ENCODE measurements at regions of chr9 and their contacts with region 1.

Region 1: DNA sequence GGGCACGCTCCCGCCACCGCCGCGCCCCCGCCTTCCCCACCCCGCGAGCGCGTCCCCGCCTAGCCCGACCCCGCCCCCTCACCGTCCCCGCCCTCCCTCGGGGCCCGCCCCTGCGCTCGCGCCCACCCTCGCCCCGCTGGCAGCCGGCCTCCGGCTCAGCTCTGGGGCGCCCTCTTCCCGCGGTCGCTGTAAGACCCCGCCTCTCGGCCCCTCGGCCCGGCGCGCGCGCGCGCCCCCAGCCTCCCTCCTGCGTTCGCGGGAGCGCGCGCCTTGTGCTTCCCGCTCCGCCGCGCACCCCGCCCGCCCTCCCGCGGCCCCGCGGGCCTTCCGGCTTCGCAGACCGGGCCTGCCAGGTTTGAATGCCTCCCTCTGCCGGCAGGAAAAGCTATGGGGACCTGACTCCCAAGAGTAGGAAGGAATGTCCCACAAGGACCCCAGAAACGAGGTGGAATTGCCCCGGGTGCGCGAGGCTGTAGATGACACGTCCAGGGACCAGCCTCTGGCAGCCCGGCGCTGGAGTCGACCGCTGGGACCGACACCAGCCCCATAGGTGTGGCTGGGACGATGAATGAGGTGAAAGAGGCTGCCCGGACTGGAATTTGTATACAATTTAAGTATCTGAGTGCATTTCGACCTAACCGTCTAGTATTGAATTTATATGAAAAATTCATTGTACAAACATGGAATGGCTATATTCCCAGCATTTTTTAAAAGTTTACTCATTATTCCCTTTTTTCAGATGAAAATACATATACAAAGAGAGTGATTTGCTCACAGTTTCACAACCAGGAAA is 416 bp upstream of the PTBP3 start:
- DNase-seq: peak; percentile 97
- ATAC-seq: peak; percentile 84
- H3K4me3 Mint-ChIP-seq: peak overlapping the region; percentile 89
- H3K27ac Mint-ChIP-seq: peak overlapping the region; percentile 98
- H3K4me1 Mint-ChIP-seq: peaks cover 33% of the 10 kb centered on the region
- H3K27me3 Mint-ChIP-seq: no peaks in the 10 kb centered on the region

Region 2: DNA sequence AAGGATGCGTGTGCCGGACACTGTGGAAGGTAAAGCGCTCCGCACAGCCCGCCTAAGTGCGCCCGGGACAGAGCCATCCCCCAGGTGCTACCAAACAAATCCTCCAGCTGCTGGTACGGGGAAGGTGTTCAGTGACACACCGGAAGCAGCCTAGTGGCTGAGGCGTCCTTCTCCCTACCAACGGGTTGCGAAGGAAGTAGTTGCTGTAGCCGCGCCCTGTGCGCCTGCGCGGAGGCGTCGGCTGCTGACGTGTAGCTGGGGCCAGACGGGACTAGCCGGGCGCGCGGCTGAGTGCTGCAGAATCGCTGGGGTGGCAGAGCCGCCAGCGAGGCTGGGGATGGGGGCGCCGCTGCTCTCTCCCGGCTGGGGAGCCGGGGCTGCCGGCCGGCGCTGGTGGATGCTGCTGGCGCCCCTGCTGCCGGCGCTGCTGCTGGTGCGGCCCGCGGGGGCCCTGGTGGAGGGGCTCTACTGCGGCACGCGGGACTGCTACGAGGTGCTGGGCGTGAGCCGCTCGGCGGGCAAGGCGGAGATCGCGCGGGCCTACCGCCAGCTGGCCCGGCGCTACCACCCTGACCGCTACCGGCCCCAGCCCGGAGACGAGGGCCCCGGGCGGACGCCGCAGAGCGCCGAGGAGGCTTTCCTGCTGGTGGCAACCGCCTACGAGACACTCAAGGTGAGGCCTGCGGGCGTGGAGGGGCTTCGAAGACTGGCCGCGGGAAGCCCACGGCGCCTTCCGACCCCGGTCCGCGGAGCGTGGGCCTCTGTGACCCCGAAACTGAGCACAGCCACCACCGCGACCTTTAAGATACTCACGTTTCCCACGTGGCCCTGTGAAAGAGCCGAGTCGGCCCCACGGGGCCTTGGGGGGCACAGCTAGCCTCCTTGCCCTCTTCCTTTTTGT is 702.5 kb before region 1 on chr9 and contains the start of gene DNAJC25:
- CTCF ChIA-PET with region 1: no interaction called
- POLR2A ChIA-PET with region 1: no interaction called
- intact Hi-C with region 1: loop called in 1 of 2 experiments (anchors 5 kb)
- DNase-seq: peak; percentile 98
- ATAC-seq: peak; percentile 98
- H3K4me3 Mint-ChIP-seq: peak within 1 kb of the TSS; percentile 94
- H3K27ac Mint-ChIP-seq: peak within 1 kb of the TSS; percentile 91
- H3K4me1 Mint-ChIP-seq: peaks cover 47% of the 10 kb centered on the region
- H3K27me3 Mint-ChIP-seq: no peaks in the 10 kb centered on the region
- total RNA-seq, gene DNAJC25: 6.3 to 7.5 TPM

Region 3: GRCh38 chr9:111992523-111992922 is 341.3 kb before region 1 on chr9:
- CTCF ChIA-PET with region 1: interaction called, 3 read pairs
- POLR2A ChIA-PET with region 1: no interaction called
- intact Hi-C with region 1: loop called in 1 of 2 experiments (anchors 5 kb)
- DNase-seq: peak; percentile 62
- ATAC-seq: peak; percentile 92
- H3K4me3 Mint-ChIP-seq: no peak overlapping the region
- H3K27ac Mint-ChIP-seq: no peak overlapping the region
- H3K4me1 Mint-ChIP-seq: peaks cover 34% of the 10 kb centered on the region
- H3K27me3 Mint-ChIP-seq: peaks cover 2% of the 10 kb centered on the region

Region 4: DNA sequence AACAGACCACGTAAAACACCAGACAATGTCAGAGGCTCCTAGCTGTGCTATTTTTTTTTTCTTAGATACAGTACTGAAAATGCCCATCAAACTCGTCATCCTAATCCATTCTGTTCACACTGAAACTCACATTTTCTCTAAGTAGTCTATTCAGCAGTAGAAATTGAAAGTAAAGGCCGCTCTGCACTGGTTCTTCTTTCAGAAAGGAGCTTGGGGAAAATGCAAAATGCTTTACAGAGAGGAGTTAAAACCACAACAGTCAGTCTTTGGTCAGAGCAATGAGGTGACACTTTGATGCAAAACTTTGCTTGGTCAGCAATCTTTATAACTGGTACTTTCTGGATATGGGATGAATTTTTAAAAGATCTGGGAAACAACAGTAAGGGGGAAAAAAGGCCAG is 114.9 kb before region 1 on chr9:
- CTCF ChIA-PET with region 1: no interaction called
- POLR2A ChIA-PET with region 1: no interaction called
- intact Hi-C with region 1: loop called (anchors 2 kb)
- DNase-seq: peak; percentile 18
- ATAC-seq: peak; percentile 95
- H3K4me3 Mint-ChIP-seq: no peak overlapping the region
- H3K27ac Mint-ChIP-seq: peak overlapping the region; percentile 64
- H3K4me1 Mint-ChIP-seq: peaks cover 32% of the 10 kb centered on the region
- H3K27me3 Mint-ChIP-seq: no peaks in the 10 kb centered on the region

Region 5: GRCh38 chr9:112355427-112355897 is 21.6 kb after region 1 on chr9:
- CTCF ChIA-PET with region 1: interaction called, 8 read pairs
- POLR2A ChIA-PET with region 1: interaction called, 3 read pairs
- intact Hi-C with region 1: loop called (anchors 1 kb)
- DNase-seq: peak; percentile 21
- ATAC-seq: peak; percentile 71
- H3K4me3 Mint-ChIP-seq: no peak overlapping the region
- H3K27ac Mint-ChIP-seq: peak overlapping the region; percentile 87
- H3K4me1 Mint-ChIP-seq: peaks cover 31% of the 10 kb centered on the region
- H3K27me3 Mint-ChIP-seq: peaks cover 2% of the 10 kb centered on the region

Region 6: DNA sequence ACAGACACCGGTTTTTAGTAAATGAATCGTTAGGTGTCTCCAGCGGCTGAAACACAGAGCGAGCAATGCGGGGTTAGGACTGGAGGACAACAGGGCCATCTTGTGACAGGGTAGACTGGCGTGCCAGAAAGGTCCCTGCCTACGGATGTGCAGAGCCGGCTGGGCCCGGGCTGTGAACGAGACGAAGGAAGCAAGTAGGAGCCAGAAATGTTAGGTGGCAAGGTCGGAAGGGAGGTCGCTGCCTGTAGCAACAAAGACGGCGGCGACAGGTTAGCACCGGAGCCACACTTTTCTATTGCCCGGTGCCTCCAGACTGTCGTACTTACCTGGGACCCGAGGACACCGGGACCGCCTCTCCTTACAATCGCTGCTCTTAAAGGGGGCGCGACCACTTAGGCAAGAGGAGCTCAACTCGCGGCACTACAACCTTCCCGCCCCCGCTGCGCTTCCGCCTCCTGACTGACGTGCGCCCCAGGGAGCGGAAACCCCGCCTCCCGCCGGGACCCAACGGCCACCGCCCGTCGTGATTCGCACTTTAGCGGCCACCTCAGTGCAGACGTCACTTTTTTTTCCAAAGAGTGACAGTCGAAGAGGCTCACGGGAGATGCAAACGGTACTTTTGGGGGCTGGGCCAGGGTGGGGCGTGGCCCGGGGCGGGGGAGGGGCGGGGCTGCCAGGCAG is 384.0 kb after region 1 on chr9 and contains the start of gene INIP:
- CTCF ChIA-PET with region 1: no interaction called
- POLR2A ChIA-PET with region 1: no interaction called
- intact Hi-C with region 1: loop called (anchors 1 to 2 kb)
- DNase-seq: peak; percentile 99
- ATAC-seq: peak; percentile 93
- H3K4me3 Mint-ChIP-seq: peak within 1 kb of the TSS; percentile 89
- H3K27ac Mint-ChIP-seq: peak within 1 kb of the TSS; percentile 97
- H3K4me1 Mint-ChIP-seq: peaks cover 35% of the 10 kb centered on the region
- H3K27me3 Mint-ChIP-seq: no peaks in the 10 kb centered on the region
- total RNA-seq, gene INIP: 37.3 to 37.7 TPM

Measured in activated CD4-positive, alpha-beta T cell treated with anti-CD3 and anti-CD28 coated beads for 36 hours (primary cell).